Caco-2 (cell line): ENCODE measurements at regions of chr1 and their contacts with region 1.

Region 1: GRCh38 chr1:58783993-58784757 is at the start of gene JUN:
- DNase-seq: peak; percentile 95 to 97
- H3K4me3 ChIP-seq: peak within 1 kb of the TSS; percentile 70
- H3K4me3 Mint-ChIP-seq: peak within 1 kb of the TSS; percentile 83
- H3K27ac Mint-ChIP-seq: peak within 1 kb of the TSS; percentile 94
- H3K4me1 ChIP-seq: peaks cover 7% of the 10 kb centered on the region; the same call in 1 of the 2 replicates
- H3K4me1 Mint-ChIP-seq: peaks cover 8% of the 10 kb centered on the region
- H3K27me3 ChIP-seq: no peaks in the 10 kb centered on the region
- H3K27me3 Mint-ChIP-seq: no peaks in the 10 kb centered on the region
- CTCF ChIP-seq: no peak
- total RNA-seq, gene JUN: 25.7 and 28.2 TPM in 2 replicates

Region 2: GRCh38 chr1:58739856-58740466 is 44.2 kb before region 1 on chr1:
- CTCF ChIA-PET with region 1: no interaction called
- POLR2A ChIA-PET with region 1: no interaction called
- intact Hi-C with region 1: no loop called
- DNase-seq: peak in 1 of 2 experiments; percentile 57
- H3K4me3 ChIP-seq: no peak overlapping the region
- H3K4me3 Mint-ChIP-seq: no peak overlapping the region
- H3K27ac Mint-ChIP-seq: no peak overlapping the region
- H3K4me1 ChIP-seq: no peaks in the 10 kb centered on the region
- H3K4me1 Mint-ChIP-seq: no peaks in the 10 kb centered on the region
- H3K27me3 ChIP-seq: no peaks in the 10 kb centered on the region
- H3K27me3 Mint-ChIP-seq: no peaks in the 10 kb centered on the region
- CTCF ChIP-seq: peak; percentile 65

Region 3: GRCh38 chr1:58816072-58816746 is 32.0 kb after region 1 on chr1:
- CTCF ChIA-PET with region 1: no interaction called
- POLR2A ChIA-PET with region 1: interaction called, 6 read pairs
- intact Hi-C with region 1: loop called (anchors 1 kb)
- DNase-seq: peak; percentile 74 to 80
- H3K4me3 ChIP-seq: peak overlapping the region; percentile 55
- H3K4me3 Mint-ChIP-seq: peak overlapping the region; percentile 77
- H3K27ac Mint-ChIP-seq: peak overlapping the region; percentile 73
- H3K4me1 ChIP-seq: peaks cover 22% of the 10 kb centered on the region
- H3K4me1 Mint-ChIP-seq: peaks cover 7% of the 10 kb centered on the region
- H3K27me3 ChIP-seq: no peaks in the 10 kb centered on the region
- H3K27me3 Mint-ChIP-seq: no peaks in the 10 kb centered on the region
- CTCF ChIP-seq: no peak

Region 4: GRCh38 chr1:58884706-58885661 is 100.8 kb after region 1 on chr1:
- CTCF ChIA-PET with region 1: no interaction called
- POLR2A ChIA-PET with region 1: interaction called, 3 read pairs
- intact Hi-C with region 1: loop called (anchors 1 kb)
- DNase-seq: peak; percentile 87 to 93
- H3K4me3 ChIP-seq: no peak overlapping the region
- H3K4me3 Mint-ChIP-seq: peak overlapping the region; percentile 42
- H3K27ac Mint-ChIP-seq: peak overlapping the region; percentile 78
- H3K4me1 ChIP-seq: peaks cover 49% of the 10 kb centered on the region
- H3K4me1 Mint-ChIP-seq: peaks cover 42% of the 10 kb centered on the region
- H3K27me3 ChIP-seq: no peaks in the 10 kb centered on the region
- H3K27me3 Mint-ChIP-seq: no peaks in the 10 kb centered on the region
- CTCF ChIP-seq: no peak

Region 5: GRCh38 chr1:59052166-59052590 is 268.0 kb after region 1 on chr1:
- CTCF ChIA-PET with region 1: no interaction called
- POLR2A ChIA-PET with region 1: no interaction called
- intact Hi-C with region 1: loop called (anchors 2 kb)
- DNase-seq: peak; percentile 55 to 58
- H3K4me3 ChIP-seq: no peak overlapping the region
- H3K4me3 Mint-ChIP-seq: no peak overlapping the region
- H3K27ac Mint-ChIP-seq: no peak overlapping the region
- H3K4me1 ChIP-seq: no peaks in the 10 kb centered on the region
- H3K4me1 Mint-ChIP-seq: no peaks in the 10 kb centered on the region
- H3K27me3 ChIP-seq: no peaks in the 10 kb centered on the region
- H3K27me3 Mint-ChIP-seq: no peaks in the 10 kb centered on the region
- CTCF ChIP-seq: no peak

Region 6: GRCh38 chr1:59296358-59297256 is 512.4 kb after region 1 on chr1 and contains the start of gene FGGY:
- CTCF ChIA-PET with region 1: no interaction called
- POLR2A ChIA-PET with region 1: interaction called, 7 read pairs
- intact Hi-C with region 1: loop called (anchors 5 kb)
- DNase-seq: peak; percentile 89 to 94
- H3K4me3 ChIP-seq: peak within 1 kb of the TSS; percentile 39
- H3K4me3 Mint-ChIP-seq: peak within 1 kb of the TSS; percentile 83
- H3K27ac Mint-ChIP-seq: peak within 1 kb of the TSS; percentile 79
- H3K4me1 ChIP-seq: no peaks in the 10 kb centered on the region
- H3K4me1 Mint-ChIP-seq: peaks cover 15% of the 10 kb centered on the region
- H3K27me3 ChIP-seq: no peaks in the 10 kb centered on the region
- H3K27me3 Mint-ChIP-seq: no peaks in the 10 kb centered on the region
- CTCF ChIP-seq: no peak
- total RNA-seq, gene FGGY: 3.4 and 6.4 TPM in 2 replicates